ENCODE measurements at regions of chr3 and their contacts with region 1.

Region 1: DNA sequence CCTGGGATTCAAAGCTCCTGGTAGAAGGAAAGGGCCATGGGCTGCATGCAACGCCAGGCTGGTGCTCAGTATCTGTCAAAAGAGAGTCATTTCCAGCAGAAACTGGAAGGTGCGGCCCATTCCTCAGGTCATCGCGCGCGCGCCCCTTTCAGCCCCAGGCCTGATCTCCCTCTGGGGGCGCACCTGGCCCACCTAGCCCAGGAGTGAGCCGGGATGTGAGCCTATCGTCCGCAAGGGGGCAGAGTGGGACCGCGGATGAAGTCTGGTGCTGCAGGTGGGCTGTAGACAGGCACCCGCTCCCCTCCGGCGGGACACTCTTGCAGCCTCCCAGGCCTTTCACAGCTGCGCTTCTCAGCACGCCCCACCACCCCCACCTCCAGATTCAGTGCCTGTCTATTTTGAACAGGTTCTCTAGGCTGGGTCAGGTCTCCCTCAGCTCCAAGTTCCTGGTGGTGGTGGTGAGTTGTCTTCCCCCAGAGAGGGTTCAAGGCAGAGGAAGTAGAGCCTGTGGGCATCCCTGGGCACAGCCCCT is 5.8 kb upstream of the RPL29 start:
- DNase-seq: peak; percentile 56 to 68
- H3K4me3 ChIP-seq: no peak overlapping the region
- H3K27ac ChIP-seq: no peak overlapping the region
- H3K4me1 ChIP-seq: peaks cover 7 to 12% of the 10 kb centered on the region in 2 donors
- H3K27me3 ChIP-seq: no peaks in the 10 kb centered on the region
- CTCF ChIP-seq: peak; percentile 82 to 96 (median 95)
- POLR2A ChIP-seq: no peak

Region 2: DNA sequence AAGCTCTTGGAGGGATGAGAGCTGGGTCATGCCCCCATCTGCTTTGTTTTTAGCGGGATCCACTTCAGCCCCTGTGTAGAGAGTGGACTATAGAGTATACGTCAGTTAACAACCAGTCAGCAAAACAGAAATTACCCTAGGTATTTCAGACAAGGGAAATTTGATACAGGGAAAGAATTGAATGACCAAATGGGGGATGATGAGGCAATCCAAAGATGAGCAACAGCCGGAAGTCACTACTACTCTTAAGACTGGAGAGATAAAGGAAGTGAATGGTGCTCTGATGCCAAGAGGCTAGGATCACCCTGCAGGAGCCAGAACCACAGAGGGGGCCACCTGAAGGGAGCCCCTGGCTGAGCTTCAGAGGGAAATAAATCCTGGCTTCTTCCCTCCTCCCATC is 48.1 kb before region 1 on chr3:
- intact Hi-C with region 1: loop called (anchors 1 kb)
- DNase-seq: no peak
- H3K4me3 ChIP-seq: no peak overlapping the region
- H3K27ac ChIP-seq: no peak overlapping the region
- H3K4me1 ChIP-seq: peaks cover 0 to 5% of the 10 kb centered on the region in 2 donors
- H3K27me3 ChIP-seq: no peaks in the 10 kb centered on the region
- CTCF ChIP-seq: no peak
- POLR2A ChIP-seq: no peak

Region 3: DNA sequence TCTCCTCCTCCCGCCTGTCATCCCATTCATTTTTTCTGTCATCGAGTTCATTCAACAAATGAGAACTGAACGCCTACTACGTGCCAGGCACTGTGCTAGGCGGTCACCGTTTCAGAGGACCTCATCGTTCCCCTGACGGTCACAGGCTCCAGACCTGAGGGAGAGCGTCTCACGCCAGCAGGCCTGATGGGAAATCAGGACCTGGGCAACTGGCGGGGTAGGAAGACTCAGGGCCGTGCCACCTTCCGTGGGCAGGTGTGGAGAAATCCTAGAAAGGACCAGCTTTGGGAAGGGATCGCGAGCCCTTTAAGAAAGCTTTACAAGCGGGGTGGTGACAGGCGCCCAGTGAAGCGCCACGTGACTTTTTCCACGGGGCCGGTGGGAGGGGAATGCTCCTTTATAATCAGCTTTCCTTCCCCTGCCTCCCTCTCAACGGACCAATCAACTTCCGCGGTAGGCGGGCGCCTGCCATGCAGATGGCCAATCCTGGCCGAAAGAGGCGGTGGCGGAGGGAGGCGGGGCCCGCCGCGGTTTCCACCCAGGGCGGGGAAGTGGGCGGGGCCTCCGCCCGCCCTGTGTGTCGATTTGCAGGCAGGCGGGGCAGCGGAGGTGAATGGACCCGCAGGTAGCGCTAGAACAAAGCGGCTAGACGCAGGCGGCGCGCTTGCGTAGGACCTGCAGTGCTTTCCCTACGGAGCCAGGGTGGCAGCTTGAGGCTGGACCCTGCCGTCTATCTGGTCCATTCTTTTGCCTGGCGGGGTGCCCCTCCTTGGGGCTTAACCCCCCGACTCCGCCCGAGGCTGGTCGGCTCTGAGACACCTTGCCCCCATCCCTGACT is 55.7 kb after region 1 on chr3:
- intact Hi-C with region 1: loop called (anchors 10 kb)
- DNase-seq: peak; percentile 99
- H3K4me3 ChIP-seq: peak overlapping the region; percentile 52 to 95 (median 78)
- H3K27ac ChIP-seq: peak overlapping the region; percentile 92 to 94
- H3K4me1 ChIP-seq: peaks cover 16 to 26% of the 10 kb centered on the region in 2 donors
- H3K27me3 ChIP-seq: no peaks in the 10 kb centered on the region
- CTCF ChIP-seq: peak in 1 of 3 donors; percentile 12
- POLR2A ChIP-seq: no peak

Region 4: DNA sequence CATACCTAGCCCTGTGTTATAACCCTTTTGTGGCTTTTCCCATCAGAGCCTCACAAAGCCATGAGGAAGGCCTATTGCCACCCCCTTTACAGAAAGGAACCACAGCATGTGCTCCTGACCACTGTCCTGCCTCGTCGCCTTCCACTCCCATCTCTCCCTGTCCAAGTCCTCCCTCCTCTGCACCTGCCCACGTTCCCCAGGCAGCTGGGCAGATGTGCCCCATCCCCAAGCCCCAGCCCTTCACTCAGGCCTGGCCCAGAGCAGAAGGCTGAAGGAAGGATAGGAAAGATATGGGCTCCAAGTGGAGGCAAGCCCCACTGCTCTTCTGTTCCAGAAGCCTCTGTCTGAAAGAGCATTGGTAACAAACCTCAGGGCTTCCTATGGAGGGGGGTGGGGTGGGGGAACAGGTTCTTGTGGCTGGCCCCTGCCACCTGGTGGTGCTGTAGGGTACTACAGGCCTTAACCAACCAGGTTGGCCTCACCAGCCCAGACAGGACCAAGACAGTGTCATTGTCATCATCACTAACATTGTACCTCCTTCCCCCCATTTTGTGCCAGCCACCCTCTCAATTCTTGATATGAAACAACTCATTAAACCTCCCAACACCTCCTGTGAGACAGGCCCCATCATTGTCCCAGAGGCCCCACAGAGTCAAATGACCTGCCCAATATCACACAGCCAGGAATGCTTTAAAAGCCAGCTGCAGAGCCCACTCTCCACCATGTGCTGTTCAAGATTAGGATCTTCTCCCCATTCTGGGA is 142.7 kb after region 1 on chr3:
- intact Hi-C with region 1: loop called (anchors 5 kb)
- DNase-seq: peak; percentile 88
- H3K4me3 ChIP-seq: no peak overlapping the region
- H3K27ac ChIP-seq: no peak overlapping the region
- H3K4me1 ChIP-seq: no peaks in the 10 kb centered on the region
- H3K27me3 ChIP-seq: no peaks in the 10 kb centered on the region
- CTCF ChIP-seq: peak; percentile 96 to 99 (median 98)
- POLR2A ChIP-seq: no peak

Region 5: DNA sequence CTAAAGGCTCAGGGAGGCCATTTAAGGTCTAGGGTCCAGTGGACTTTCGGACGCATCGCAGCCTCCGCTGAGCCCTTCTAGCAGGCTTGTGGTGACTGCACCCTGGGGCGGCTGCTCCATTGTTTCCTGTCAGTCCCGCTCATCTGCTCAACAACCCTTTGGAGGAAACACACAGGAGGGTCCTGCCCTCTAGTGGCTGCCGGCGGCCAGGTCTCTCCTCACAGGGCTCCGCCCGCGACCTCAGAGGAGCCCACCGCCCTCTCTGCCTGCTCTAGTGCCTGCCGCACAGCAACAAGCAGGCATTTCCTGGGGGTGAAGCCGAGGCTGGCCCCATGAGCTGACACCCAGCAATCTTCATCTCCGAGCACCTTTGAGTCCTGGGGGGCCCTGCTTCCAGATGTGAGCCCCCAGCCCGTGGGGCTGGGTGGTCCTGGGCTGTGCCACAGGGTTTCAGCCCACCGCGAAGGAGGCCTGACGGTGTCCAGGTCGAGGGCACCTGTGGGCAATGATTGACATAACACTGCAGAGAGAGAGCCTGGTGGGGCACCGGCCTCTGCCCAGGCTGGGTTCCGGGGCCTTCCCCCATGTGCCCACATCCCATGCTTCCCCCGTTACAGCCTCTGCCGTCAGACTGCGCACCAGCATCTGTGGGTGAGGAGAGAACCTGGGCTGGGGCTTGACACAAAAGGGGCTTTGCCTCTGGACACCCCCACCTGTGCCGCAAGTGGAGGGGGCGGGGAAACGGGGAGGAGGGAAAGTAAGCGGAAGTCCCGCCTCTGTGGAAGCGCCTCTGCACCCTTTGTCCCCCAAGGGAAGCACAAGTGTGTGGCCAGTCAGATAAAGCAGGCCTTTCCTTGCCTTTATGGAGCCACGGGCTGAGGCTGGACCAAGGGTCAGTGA is 1071.4 kb after region 1 on chr3:
- intact Hi-C with region 1: no loop called
- DNase-seq: peak; percentile 68 to 84
- H3K4me3 ChIP-seq: peak overlapping the region; percentile 62 to 85 (median 82)
- H3K27ac ChIP-seq: peak overlapping the region; percentile 72 to 83
- H3K4me1 ChIP-seq: peaks cover 0 to 7% of the 10 kb centered on the region in 2 donors
- H3K27me3 ChIP-seq: no peaks in the 10 kb centered on the region
- CTCF ChIP-seq: peak; percentile 72 to 89 (median 87)
- POLR2A ChIP-seq: no peak

Measured in breast epithelium (tissue), 4 donors.